ENCODE measurements at regions of chr3 and their contacts with region 1.

Region 1: GRCh38 chr3:193857996-193858395 is 265.0 kb downstream of the OPA1 start:
- DNase-seq: no peak
- ATAC-seq: peak; percentile 89

Region 2: DNA sequence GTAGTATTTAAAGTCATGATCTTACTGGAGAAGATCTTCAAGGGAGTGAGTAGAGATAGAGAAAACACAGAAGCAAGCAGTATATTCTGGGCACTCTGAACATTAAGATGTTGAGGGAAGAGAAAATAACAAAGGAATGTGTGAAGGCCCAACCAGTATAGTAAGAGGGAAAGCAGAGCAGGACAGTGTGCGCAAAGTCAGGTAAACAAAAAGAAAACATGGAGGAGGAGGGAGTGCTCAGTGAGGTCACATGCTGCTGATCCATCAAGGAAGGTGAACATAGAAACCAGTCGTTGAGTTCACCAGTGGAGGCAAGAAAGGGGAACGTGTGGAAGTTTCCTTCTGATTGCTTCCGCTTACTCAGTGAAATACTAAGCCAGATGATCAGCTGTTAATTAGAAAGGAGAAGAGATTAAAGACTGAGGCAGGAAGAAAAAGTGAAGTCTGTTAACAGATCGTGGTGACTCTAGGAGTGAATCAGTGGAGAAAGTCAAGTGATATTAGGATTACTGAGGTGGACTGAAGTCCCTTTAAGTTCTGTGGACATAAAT is 217.8 kb before region 1 on chr3:
- intact Hi-C with region 1: no loop called
- DNase-seq: no peak
- ATAC-seq: no peak

Region 3: GRCh38 chr3:194103983-194104751 is 246.2 kb after region 1 on chr3:
- intact Hi-C with region 1: loop called (anchors 10 kb)
- DNase-seq: no peak
- ATAC-seq: no peak

Measured in sciatic nerve (tissue), 2 donors.